HepG2 (cell line): ENCODE measurements at regions of chr11 and their contacts with region 1.

Region 1: GRCh38 chr11:34783816-34784317 is 132.3 kb downstream of the APIP start:
- DNase-seq: peak; percentile 98
- ATAC-seq: peak; percentile 96
- H3K4me3 ChIP-seq: peak overlapping the region; percentile 2 to 38 (median 26); a peak in 4 of 6 replicates
- H3K27ac ChIP-seq: peak overlapping the region; percentile 92
- H3K4me1 ChIP-seq: peaks cover 46% of the 10 kb centered on the region
- H3K27me3 ChIP-seq: no peaks in the 10 kb centered on the region
- CTCF ChIP-seq: no peak
- EP300 ChIP-seq: peak in 1 of 2 experiments; percentile 84; a peak in 2 of 4 replicates
- POLR2A ChIP-seq: peak in 1 of 2 experiments; percentile 36; a peak in 1 of 4 replicates
- RAD21 ChIP-seq: no peak

Region 2: GRCh38 chr11:34366522-34366921 is 417.3 kb before region 1 on chr11:
- CTCF ChIA-PET with region 1: no interaction called
- POLR2A ChIA-PET with region 1: no interaction called
- in situ Hi-C with region 1: no loop called
- intact Hi-C with region 1: no loop called
- DNase-seq: peak; percentile 57
- ATAC-seq: no peak
- H3K4me3 ChIP-seq: no peak overlapping the region
- H3K27ac ChIP-seq: no peak overlapping the region
- H3K4me1 ChIP-seq: peaks cover 56% of the 10 kb centered on the region
- H3K27me3 ChIP-seq: no peaks in the 10 kb centered on the region
- CTCF ChIP-seq: peak; percentile 60
- EP300 ChIP-seq: no peak
- POLR2A ChIP-seq: no peak
- RAD21 ChIP-seq: 0 out of 2 replicates have a peak, but pooled peaks have one; percentile 21

Region 3: GRCh38 chr11:34825670-34826383 is 42.0 kb after region 1 on chr11:
- CTCF ChIA-PET with region 1: no interaction called
- POLR2A ChIA-PET with region 1: no interaction called
- in situ Hi-C with region 1: no loop called
- intact Hi-C with region 1: loop called (anchors 1 kb)
- DNase-seq: peak; percentile 99
- ATAC-seq: peak; percentile 96
- H3K4me3 ChIP-seq: peak overlapping the region in 2 of 3 experiments; percentile 15 to 38; a peak in 2 of 6 replicates
- H3K27ac ChIP-seq: peak overlapping the region; percentile 92
- H3K4me1 ChIP-seq: peaks cover 62% of the 10 kb centered on the region
- H3K27me3 ChIP-seq: no peaks in the 10 kb centered on the region
- CTCF ChIP-seq: no peak
- EP300 ChIP-seq: peak; percentile 36 to 73; a peak in 2 of 4 replicates
- POLR2A ChIP-seq: peak; percentile 33 to 70; a peak in 2 of 4 replicates
- RAD21 ChIP-seq: peak; percentile 8; the same call in 1 of the 2 replicates